ENCODE measurements at regions of chr17 and their contacts with region 1.

Region 1: DNA sequence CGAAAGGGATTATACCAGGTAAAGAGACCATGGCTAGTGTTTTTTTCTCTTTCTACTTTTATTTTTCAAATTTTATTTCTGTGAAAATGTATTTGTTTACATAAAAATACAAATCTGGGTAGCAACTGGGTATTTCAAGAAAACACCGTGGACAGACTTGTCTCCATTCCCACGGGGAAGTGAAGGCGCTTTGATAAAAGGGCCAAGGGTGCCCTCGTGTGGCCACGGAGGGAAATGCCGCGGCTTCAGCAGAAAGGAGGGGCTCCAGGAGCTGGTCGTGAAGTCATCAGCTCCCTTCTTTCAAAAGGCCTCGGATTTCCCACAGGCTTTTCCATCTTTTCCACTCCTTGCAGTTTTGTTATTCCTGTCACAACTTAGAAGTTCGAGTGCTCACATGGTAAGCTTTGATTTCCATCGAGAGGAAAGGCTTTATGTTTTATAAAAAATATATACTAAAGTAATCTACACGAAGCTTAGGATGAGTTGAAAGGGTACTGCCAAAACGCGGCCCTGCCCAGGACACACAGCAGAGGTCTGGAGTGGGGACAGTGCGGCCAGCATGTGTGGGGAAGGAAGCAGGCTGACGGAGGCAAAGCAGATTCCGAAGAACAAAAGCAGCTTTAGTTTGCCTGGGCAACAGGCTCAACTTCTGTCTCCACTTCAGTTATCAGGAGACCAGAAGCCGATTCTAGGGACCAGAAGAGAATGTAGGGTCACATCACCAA is 15.3 kb upstream of the MNT start:
- DNase-seq: peak; percentile 88
- H3K4me3 ChIP-seq: no peak overlapping the region; a peak in 1 of 4 replicates
- H3K27ac ChIP-seq: peak overlapping the region; percentile 39 to 41; a peak in 2 of 4 replicates
- H3K4me1 ChIP-seq: peaks cover 0 to 6% of the 10 kb centered on the region in 2 experiments; a peak in 1 of 4 replicates
- H3K27me3 ChIP-seq: no peaks in the 10 kb centered on the region
- CTCF ChIP-seq: peak; percentile 98
- EP300 ChIP-seq: no peak
- RAD21 ChIP-seq: peak; percentile 92

Region 2: DNA sequence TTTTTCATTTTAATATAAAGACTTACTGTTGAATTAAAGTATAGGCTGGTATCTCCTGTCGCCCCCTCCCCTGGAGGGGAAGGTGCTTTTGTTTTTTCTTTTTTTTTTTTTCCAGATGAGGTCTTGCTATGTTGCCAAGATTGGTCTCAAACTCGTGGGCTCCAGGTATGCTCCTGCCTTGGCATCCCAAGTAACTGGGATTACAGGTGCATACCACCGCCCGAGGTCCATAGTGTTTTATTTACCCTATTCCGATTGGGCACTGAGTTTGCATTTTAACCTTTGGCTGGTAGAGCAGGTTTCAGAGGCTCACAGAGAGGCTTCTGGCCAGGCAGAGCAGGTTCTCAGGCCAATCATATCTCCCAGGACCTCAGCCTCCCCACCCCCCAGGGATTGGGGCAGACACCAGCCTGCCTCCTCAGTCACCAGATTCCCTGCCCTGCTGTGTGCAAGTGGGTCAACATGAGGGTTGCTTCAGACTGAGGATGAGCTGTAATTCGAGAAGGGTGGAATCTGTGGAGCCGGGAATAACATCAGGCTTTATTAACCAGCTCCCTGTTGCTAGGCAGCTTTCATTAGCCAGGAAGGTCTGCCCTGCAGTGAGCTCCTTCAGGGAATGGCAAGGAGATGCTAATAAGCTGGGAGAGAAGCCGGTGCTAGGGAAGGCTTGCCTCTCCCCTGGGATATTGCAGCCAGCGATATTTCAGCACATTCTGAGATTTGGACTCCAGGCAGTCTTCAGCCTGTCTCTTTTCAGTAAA is 68.4 kb before region 1 on chr17:
- CTCF ChIA-PET with region 1: interaction called, 10 read pairs
- POLR2A ChIA-PET with region 1: no interaction called
- DNase-seq: no peak
- H3K4me3 ChIP-seq: no peak overlapping the region
- H3K27ac ChIP-seq: peak overlapping the region; percentile 41 to 44; a peak in 3 of 4 replicates
- H3K4me1 ChIP-seq: peaks cover 6 to 10% of the 10 kb centered on the region in 2 experiments; a peak in 2 of 4 replicates
- H3K27me3 ChIP-seq: no peaks in the 10 kb centered on the region
- CTCF ChIP-seq: no peak
- EP300 ChIP-seq: no peak
- RAD21 ChIP-seq: no peak

Region 3: GRCh38 chr17:2386400-2387085 is 29.6 kb before region 1 on chr17:
- CTCF ChIA-PET with region 1: interaction called, 654 read pairs
- POLR2A ChIA-PET with region 1: interaction called, 27 read pairs
- DNase-seq: peak; percentile 10
- H3K4me3 ChIP-seq: no peak overlapping the region
- H3K27ac ChIP-seq: no peak overlapping the region; a peak in 1 of 4 replicates
- H3K4me1 ChIP-seq: peaks cover 0 to 44% of the 10 kb centered on the region in 2 experiments; a peak in 1 of 4 replicates
- H3K27me3 ChIP-seq: no peaks in the 10 kb centered on the region
- CTCF ChIP-seq: no peak
- EP300 ChIP-seq: no peak
- RAD21 ChIP-seq: no peak

Region 4: DNA sequence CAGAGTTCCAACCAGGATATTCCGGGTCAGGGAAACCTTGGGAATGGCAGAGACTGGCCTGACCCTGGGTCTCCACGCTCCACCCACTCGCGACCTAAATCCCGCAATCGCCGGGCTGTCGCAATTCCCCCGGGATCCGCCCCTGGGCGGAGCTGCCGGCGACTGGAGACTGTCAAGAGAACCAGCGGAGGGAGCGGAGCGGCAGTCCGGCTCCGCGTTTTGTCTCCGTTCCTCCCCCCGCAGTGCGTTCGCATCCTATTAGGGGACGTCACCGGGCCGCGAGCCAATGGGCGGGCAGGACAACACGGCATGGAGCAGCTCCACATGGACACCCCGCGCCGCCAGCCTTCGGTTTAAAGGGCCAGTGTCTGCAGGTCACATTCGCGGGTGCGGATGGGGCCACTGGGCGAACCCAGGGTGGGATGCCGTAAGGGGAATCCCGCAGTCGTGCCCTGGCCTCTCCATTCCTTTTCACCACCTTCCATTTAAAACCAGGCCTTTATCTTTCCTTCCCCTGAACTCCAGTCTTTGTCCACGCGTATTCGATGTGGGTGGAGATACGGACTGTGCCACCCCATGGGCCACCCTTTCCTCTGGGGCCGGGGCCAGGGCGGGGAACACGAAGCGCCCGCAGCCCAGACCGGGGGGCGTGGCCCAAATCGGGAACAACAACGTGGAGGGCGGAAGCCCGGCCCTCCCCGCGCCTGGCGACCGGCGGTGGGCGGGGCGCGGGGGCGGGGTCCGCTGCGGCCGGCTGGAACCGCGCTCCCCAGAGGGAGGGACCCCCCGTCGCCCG is 14.5 kb before region 1 on chr17:
- CTCF ChIA-PET with region 1: interaction called, 71 read pairs
- POLR2A ChIA-PET with region 1: interaction called, 8 read pairs
- DNase-seq: peak; percentile 93
- H3K4me3 ChIP-seq: peak overlapping the region; percentile 99
- H3K27ac ChIP-seq: peak overlapping the region; percentile 98 to 100
- H3K4me1 ChIP-seq: peaks cover 35 to 42% of the 10 kb centered on the region in 2 experiments
- H3K27me3 ChIP-seq: no peaks in the 10 kb centered on the region
- CTCF ChIP-seq: no peak
- EP300 ChIP-seq: no peak
- RAD21 ChIP-seq: no peak

Region 5: DNA sequence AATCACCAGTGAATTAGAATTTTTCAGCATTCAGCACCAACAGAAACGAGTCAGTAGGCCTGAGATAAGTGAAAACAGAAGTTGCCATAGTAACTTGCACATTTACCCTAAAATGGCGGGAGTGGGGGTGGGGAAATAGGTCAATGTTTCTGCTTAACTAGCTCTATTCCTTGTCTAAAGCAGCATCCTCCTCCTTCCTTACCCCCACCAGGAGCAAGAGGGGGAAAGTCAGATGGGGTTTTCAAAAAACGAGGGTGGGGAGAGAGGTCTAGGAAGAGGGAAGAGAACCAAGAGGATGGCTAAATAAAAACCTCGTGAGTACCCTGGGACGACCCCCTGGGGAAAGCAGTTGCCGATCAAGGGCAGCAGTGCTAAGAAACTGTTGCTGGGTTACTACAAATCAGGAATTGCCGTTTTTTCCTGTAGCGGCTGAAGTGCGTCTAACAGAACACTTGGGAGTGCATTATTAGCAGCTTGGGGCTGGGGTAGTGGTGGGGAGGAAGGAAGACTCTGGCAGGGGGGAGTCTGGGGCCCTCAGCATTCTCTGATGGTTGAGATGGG is 19.1 kb after region 1 on chr17:
- CTCF ChIA-PET with region 1: interaction called, 19 read pairs
- POLR2A ChIA-PET with region 1: no interaction called
- DNase-seq: peak; percentile 46
- H3K4me3 ChIP-seq: no peak overlapping the region
- H3K27ac ChIP-seq: peak overlapping the region in 1 of 2 experiments; percentile 15; a peak in 1 of 4 replicates
- H3K4me1 ChIP-seq: peaks cover 0 to 8% of the 10 kb centered on the region in 2 experiments; a peak in 1 of 4 replicates
- H3K27me3 ChIP-seq: no peaks in the 10 kb centered on the region
- CTCF ChIP-seq: no peak
- EP300 ChIP-seq: no peak
- RAD21 ChIP-seq: no peak